Activated CD4-positive, alpha-beta T cell treated with anti-CD3 and anti-CD28 coated beads for 36 hours (primary cell): ENCODE measurements at regions of chr10 and their contacts with region 1.

Region 1: GRCh38 chr10:15168781-15169554 is 475 bp upstream of the NMT2 start:
- DNase-seq: peak; percentile 100
- ATAC-seq: peak; percentile 80
- H3K4me3 Mint-ChIP-seq: peak overlapping the region; percentile 70
- H3K27ac Mint-ChIP-seq: peak overlapping the region; percentile 85
- H3K4me1 Mint-ChIP-seq: peaks cover 55% of the 10 kb centered on the region
- H3K27me3 Mint-ChIP-seq: no peaks in the 10 kb centered on the region

Region 2: DNA sequence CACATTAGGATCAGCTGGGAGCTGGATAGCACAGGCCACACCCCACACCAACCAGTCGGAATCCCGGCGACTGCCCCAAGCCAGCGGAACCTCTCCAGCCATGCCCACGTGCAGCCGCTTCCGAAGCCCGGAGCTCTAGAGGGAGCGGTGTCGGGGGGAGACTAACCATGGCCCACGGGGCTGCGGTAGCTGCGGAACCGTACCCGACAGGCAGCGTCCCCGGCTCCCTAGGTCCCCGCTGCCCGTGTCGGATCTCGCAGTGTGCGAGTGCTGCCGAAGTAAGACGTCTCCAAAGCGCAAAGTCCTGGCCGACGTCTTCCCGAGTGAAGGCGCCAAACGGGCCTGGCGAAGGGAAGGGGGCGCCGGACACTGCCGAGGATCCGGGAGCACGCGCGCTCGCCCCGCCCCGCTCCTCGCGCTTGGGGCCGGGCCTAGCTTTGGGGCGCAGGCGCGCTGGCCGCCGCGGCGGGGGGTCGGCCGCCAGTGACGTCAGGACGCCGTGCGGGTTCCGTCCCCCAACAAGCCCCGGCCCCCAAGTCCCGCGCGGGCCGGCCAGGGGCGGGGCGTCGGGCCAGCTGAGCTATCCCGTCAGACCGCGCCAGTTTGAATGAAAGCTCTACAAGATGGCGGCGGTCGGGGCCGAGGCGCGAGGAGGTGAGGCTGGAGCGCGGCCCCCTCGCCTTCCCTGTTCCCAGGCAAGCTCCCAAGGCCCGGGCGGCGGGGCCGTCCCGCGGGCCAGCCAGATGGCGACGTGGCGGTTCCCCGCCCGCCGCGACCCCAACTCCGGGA is 290.5 kb before region 1 on chr10 and contains the start of gene SUV39H2:
- CTCF ChIA-PET with region 1: interaction called, 3 read pairs
- POLR2A ChIA-PET with region 1: interaction called, 3 read pairs
- intact Hi-C with region 1: loop called in 1 of 2 experiments (anchors 1 kb)
- DNase-seq: peak; percentile 97
- ATAC-seq: peak; percentile 92
- H3K4me3 Mint-ChIP-seq: peak within 1 kb of the TSS; percentile 97
- H3K27ac Mint-ChIP-seq: peak within 1 kb of the TSS; percentile 93
- H3K4me1 Mint-ChIP-seq: peaks cover 37% of the 10 kb centered on the region
- H3K27me3 Mint-ChIP-seq: no peaks in the 10 kb centered on the region
- total RNA-seq, gene SUV39H2: 42.9 to 51.5 TPM

Region 3: DNA sequence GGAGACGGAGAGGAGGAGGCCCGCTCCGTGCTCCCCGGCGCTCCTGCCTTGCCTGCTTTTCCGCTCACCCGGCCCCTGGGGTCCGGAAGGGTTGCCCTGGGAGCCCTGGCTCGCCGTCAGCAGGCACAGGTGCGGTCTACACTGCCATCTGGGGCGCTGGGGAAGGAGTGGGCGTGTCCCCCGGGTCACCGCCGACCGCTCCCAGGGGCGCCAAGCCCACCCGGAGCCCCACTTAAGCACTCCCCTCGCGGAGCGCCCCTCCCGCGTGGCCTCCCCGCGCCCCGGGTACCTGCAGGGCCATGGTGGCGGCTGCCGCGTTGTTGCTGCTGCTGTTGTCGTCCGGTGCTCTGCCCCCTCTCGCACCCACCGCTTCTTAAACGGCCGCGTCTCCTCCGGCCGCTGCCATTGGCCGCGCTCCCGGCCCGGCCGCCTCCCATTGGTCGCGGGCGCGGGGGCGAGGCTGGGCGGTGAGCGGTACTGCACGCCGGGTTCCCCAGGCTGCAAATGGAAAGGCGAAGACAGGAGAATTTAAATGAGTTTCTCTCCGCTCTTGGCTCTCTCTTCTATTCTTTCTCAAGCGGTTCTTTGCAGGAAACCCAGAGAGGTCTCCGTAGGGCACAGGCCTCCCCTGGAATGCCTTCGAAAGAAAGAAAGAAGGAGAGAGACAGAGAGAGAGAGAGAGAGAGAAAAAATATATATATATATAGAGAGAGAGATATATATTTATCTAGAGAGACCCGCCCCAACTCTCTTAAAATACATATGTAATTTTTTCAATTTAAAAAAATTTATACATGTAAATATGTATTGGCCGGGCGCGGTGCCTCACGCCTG is 80.3 kb before region 1 on chr10 and contains the start of gene ACBD7:
- CTCF ChIA-PET with region 1: interaction called, 3 read pairs
- POLR2A ChIA-PET with region 1: no interaction called
- intact Hi-C with region 1: loop called in 1 of 2 experiments (anchors 1 kb)
- DNase-seq: peak; percentile 91
- ATAC-seq: peak; percentile 91
- H3K4me3 Mint-ChIP-seq: peak within 1 kb of the TSS; percentile 67
- H3K27ac Mint-ChIP-seq: no peak within 1 kb of the TSS
- H3K4me1 Mint-ChIP-seq: peaks cover 19% of the 10 kb centered on the region
- H3K27me3 Mint-ChIP-seq: no peaks in the 10 kb centered on the region
- total RNA-seq, gene ACBD7: 2.4 to 2.6 TPM

Region 4: GRCh38 chr10:15141136-15142054 is 27.6 kb before region 1 on chr10:
- CTCF ChIA-PET with region 1: interaction called, 6 read pairs
- POLR2A ChIA-PET with region 1: interaction called, 6 read pairs
- intact Hi-C with region 1: loop called (anchors 1 to 2 kb)
- DNase-seq: peak; percentile 67
- ATAC-seq: peak; percentile 86
- H3K4me3 Mint-ChIP-seq: peak overlapping the region; percentile 69
- H3K27ac Mint-ChIP-seq: peak overlapping the region; percentile 83
- H3K4me1 Mint-ChIP-seq: peaks cover 51% of the 10 kb centered on the region
- H3K27me3 Mint-ChIP-seq: no peaks in the 10 kb centered on the region

Region 5: GRCh38 chr10:15200626-15201025 is 31.7 kb after region 1 on chr10:
- CTCF ChIA-PET with region 1: no interaction called
- POLR2A ChIA-PET with region 1: no interaction called
- intact Hi-C with region 1: no loop called
- DNase-seq: no peak
- ATAC-seq: no peak
- H3K4me3 Mint-ChIP-seq: no peak overlapping the region
- H3K27ac Mint-ChIP-seq: no peak overlapping the region
- H3K4me1 Mint-ChIP-seq: peaks cover 11% of the 10 kb centered on the region
- H3K27me3 Mint-ChIP-seq: no peaks in the 10 kb centered on the region

Region 6: GRCh38 chr10:15370856-15371701 is 202.1 kb after region 1 on chr10 and contains the start of gene FAM171A1:
- CTCF ChIA-PET with region 1: interaction called, 3 read pairs
- POLR2A ChIA-PET with region 1: interaction called, 3 read pairs
- intact Hi-C with region 1: loop called (anchors 1 kb)
- DNase-seq: peak; percentile 85
- ATAC-seq: peak; percentile 82
- H3K4me3 Mint-ChIP-seq: peak within 1 kb of the TSS; percentile 67
- H3K27ac Mint-ChIP-seq: peak within 1 kb of the TSS; percentile 68
- H3K4me1 Mint-ChIP-seq: peaks cover 16% of the 10 kb centered on the region
- H3K27me3 Mint-ChIP-seq: peaks cover 14% of the 10 kb centered on the region
- total RNA-seq, gene FAM171A1: 4.1 to 5.8 TPM